Activated B cell treated with CpG ODN at 0.5 μM for 24 hours (primary cell): ENCODE measurements at regions of chr6 and their contacts with region 1.

Region 1: GRCh38 chr6:112043032-112044007 is 10.6 kb upstream of the CCN6 start:
- DNase-seq: peak; percentile 78
- ATAC-seq: peak; percentile 94
- H3K4me3 Mint-ChIP-seq: peak overlapping the region; percentile 91
- H3K27ac Mint-ChIP-seq: peak overlapping the region; percentile 96
- H3K4me1 Mint-ChIP-seq: peaks cover 9% of the 10 kb centered on the region
- H3K27me3 Mint-ChIP-seq: no peaks in the 10 kb centered on the region
- CTCF ChIP-seq: peak; percentile 62

Region 2: DNA sequence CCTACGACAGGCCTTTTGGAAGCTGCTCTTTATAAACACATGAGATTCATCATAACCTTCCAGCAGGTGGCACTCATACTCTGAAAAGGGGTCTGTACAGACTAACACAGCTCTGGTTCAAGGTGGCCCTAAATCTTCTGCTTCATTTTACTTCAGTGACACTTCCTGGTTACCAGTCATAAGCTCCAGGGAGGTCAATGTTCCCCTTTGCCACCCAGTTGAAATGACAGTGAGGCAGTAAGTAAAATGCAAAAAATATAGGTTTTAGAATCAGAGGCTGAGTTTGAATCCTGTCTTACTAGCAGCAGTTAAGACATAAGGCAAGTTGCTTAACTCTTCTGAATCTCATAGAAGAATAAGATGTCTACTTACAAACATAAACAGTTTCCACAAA is 1360.9 kb before region 1 on chr6:
- CTCF ChIA-PET with region 1: no interaction called
- POLR2A ChIA-PET with region 1: no interaction called
- intact Hi-C with region 1: loop called (anchors 5 kb)
- DNase-seq: no peak
- ATAC-seq: peak; percentile 99
- H3K4me3 Mint-ChIP-seq: no peak overlapping the region
- H3K27ac Mint-ChIP-seq: no peak overlapping the region
- H3K4me1 Mint-ChIP-seq: peaks cover 13% of the 10 kb centered on the region
- H3K27me3 Mint-ChIP-seq: no peaks in the 10 kb centered on the region
- CTCF ChIP-seq: no peak

Region 3: GRCh38 chr6:111057074-111057752 is 986.1 kb before region 1 on chr6:
- CTCF ChIA-PET with region 1: interaction called, 4 read pairs
- POLR2A ChIA-PET with region 1: no interaction called
- intact Hi-C with region 1: loop called (anchors 1 kb)
- DNase-seq: no peak
- ATAC-seq: peak; percentile 21
- H3K4me3 Mint-ChIP-seq: no peak overlapping the region
- H3K27ac Mint-ChIP-seq: no peak overlapping the region
- H3K4me1 Mint-ChIP-seq: no peaks in the 10 kb centered on the region
- H3K27me3 Mint-ChIP-seq: peaks cover 4% of the 10 kb centered on the region
- CTCF ChIP-seq: peak; percentile 29

Region 4: DNA sequence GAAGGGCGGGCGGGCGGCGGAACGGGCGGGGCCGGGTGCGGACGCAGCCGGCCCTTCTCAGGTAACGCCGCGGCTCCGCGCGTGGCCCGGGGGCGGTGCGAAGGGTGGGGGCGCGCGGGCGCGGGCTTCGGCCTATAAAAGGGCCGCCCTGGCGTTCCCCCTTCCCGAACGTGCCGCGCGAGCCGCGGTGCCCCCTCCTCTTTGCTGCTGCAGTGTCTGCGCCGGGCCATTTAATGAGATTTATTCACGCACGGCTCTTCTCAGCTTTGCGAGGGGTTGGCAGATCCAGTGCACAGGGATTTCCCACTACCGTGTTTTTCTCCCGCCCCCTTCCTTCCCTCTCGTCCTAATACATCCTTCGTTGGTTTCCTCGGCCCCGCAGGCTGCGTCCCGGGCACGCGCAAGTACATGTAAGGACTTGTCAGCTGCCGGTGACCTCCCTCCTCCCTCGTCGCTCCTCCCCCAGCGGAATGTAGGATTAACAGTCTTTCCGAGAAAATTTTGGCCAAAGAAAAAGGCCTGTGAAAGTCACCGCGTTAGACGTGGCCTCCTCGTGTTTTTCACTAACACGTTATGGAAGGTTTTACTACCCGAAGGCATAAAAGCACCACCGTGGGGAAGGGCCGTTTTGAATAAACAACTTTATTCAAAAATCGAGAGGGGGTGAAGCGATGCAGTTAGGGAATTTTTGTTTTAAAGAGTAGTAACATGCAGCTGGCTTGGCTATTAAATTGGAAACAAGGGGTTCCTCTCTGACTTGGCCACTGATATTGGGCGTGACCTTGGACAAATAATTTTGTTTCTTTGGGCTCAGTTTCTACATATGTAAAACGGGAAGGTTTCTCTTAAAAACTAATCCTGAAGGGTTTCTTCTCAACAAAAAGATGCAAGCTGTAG is 559.3 kb before region 1 on chr6:
- CTCF ChIA-PET with region 1: no interaction called
- POLR2A ChIA-PET with region 1: interaction called, 3 read pairs
- intact Hi-C with region 1: loop called (anchors 1 kb)
- DNase-seq: peak; percentile 85
- ATAC-seq: peak; percentile 67
- H3K4me3 Mint-ChIP-seq: peak overlapping the region; percentile 97
- H3K27ac Mint-ChIP-seq: peak overlapping the region; percentile 99
- H3K4me1 Mint-ChIP-seq: peaks cover 37% of the 10 kb centered on the region
- H3K27me3 Mint-ChIP-seq: no peaks in the 10 kb centered on the region
- CTCF ChIP-seq: no peak

Region 5: DNA sequence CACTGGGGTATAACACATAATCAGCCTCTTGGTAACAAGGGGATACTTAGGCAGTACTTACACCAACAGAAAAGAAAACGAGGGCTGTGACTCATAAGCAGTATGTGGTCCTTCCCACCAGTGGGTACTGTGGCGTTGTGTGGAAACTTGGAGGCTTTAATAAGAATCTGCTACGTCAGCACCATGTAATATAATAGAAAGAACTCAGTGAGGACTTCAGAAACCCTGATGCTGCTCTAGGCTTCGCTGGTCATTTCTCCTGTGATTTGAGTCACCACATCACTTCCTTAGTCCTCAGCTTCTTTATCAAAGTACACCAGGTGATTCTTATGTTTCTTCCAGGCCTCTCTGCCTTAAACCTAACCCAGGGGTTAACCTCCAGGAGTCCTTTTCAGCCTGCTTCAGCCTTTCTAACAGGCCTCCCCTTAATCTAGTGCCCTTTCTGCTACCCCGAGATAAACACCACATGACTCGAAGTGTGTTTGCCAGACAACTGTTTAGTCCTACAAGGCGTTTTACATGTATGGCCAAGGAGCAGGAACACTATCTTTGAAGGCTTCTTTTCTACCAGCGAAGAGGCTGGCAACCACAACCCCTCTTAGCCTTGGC is 238.6 kb before region 1 on chr6:
- CTCF ChIA-PET with region 1: no interaction called
- POLR2A ChIA-PET with region 1: interaction called, 7 read pairs
- intact Hi-C with region 1: loop called (anchors 1 kb)
- DNase-seq: no peak
- ATAC-seq: peak; percentile 69
- H3K4me3 Mint-ChIP-seq: peak overlapping the region; percentile 55
- H3K27ac Mint-ChIP-seq: peak overlapping the region; percentile 90
- H3K4me1 Mint-ChIP-seq: peaks cover 53% of the 10 kb centered on the region
- H3K27me3 Mint-ChIP-seq: no peaks in the 10 kb centered on the region
- CTCF ChIP-seq: no peak

Region 6: DNA sequence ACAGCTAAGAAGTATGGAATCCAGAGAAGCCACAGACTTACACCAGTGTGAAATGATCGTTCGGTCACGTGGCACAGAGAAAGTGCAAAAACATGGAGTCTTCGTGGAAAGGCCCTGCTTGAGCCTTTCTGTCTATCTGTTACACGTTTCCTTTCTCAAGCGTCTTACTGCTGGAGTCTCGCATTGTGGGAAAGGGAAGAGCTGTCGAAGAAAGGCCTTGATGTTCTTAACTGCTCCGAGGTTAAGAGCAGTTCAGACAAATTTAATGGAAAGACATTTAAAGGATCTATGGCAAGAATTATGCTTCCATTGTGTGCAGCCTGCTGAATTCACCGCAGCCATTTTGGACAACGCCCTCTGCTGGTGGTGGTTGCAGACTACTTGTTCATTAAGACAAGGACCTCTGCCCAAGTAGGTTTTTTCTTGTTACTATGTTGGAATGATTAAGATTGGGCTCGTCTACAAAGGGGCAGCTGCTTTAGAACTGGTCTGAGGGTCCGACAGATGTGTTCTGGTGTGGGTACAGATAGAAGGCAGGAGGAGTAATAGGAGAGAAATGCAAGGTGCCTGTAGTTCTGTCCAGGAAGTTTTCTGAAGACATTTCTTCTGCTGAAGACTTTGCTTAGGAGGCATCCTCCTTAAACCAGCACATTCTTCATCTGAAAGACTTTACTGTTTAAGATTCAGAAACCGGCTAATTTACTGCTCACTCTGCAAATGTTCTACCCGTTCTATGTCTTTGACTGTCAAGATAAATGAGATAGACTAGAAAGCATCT is 14.1 kb before region 1 on chr6:
- CTCF ChIA-PET with region 1: interaction called, 14 read pairs
- POLR2A ChIA-PET with region 1: no interaction called
- intact Hi-C with region 1: no loop called
- DNase-seq: peak; percentile 33
- ATAC-seq: no peak
- H3K4me3 Mint-ChIP-seq: no peak overlapping the region
- H3K27ac Mint-ChIP-seq: no peak overlapping the region
- H3K4me1 Mint-ChIP-seq: peaks cover 16% of the 10 kb centered on the region
- H3K27me3 Mint-ChIP-seq: peaks cover 3% of the 10 kb centered on the region
- CTCF ChIP-seq: peak; percentile 25

Region 7: DNA sequence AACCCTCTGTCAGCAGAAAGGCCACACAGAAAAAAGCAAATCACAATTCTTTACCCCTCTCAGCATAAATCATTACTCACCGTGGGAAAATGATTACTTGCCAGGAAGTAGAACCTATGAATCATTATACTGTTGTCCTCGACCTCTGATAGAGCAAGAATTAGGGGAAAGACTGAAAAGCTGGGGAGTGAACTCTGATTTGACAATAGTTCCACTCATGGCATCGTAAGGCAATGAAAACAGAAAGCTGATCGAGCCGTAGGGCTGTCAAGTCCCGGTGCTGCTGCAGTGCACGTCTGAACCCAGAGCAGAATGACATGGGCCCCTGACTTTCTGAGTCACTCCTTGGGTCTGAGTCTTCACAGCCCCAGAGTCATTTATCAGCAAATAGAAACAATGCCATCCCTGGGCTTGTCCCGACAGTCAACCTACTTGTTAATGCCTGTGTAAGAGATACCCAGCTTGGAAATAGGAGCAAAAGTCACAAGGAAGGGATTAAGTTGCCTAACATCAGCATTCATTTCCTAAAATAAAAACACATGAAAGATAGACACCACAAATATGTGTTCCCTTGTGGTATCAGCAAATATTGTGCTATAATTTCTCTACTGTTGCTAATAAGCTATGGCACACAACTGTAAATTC is 1589.0 kb after region 1 on chr6:
- CTCF ChIA-PET with region 1: no interaction called
- POLR2A ChIA-PET with region 1: no interaction called
- intact Hi-C with region 1: loop called (anchors 2 kb)
- DNase-seq: no peak
- ATAC-seq: peak; percentile 32
- H3K4me3 Mint-ChIP-seq: peak overlapping the region; percentile 87
- H3K27ac Mint-ChIP-seq: peak overlapping the region; percentile 99
- H3K4me1 Mint-ChIP-seq: peaks cover 88% of the 10 kb centered on the region
- H3K27me3 Mint-ChIP-seq: no peaks in the 10 kb centered on the region
- CTCF ChIP-seq: no peak